ENCODE measurements at regions of chr6 and their contacts with region 1.

Region 1: GRCh38 chr6:161370880-161371279 is 97.0 kb upstream of the AGPAT4 start:
- DNase-seq: no peak
- H3K4me3 ChIP-seq: no peak overlapping the region
- H3K27ac ChIP-seq: no peak overlapping the region
- H3K4me1 ChIP-seq: peaks cover 0 to 10% (median 5%) of the 10 kb centered on the region in 4 donors
- H3K27me3 ChIP-seq: no peaks in the 10 kb centered on the region
- CTCF ChIP-seq: peak; percentile 79 to 88 (median 81)
- EP300 ChIP-seq: no peak
- POLR2A ChIP-seq: no peak

Region 2: GRCh38 chr6:160733050-160733646 is 637.7 kb before region 1 on chr6:
- intact Hi-C with region 1: loop called (anchors 10 kb)
- DNase-seq: no peak
- H3K4me3 ChIP-seq: no peak overlapping the region
- H3K27ac ChIP-seq: no peak overlapping the region
- H3K4me1 ChIP-seq: no peaks in the 10 kb centered on the region
- H3K27me3 ChIP-seq: peaks cover 0 to 6% (median 0%) of the 10 kb centered on the region in 4 donors
- CTCF ChIP-seq: peak; percentile 43 to 60 (median 45)
- EP300 ChIP-seq: no peak
- POLR2A ChIP-seq: no peak

Region 3: DNA sequence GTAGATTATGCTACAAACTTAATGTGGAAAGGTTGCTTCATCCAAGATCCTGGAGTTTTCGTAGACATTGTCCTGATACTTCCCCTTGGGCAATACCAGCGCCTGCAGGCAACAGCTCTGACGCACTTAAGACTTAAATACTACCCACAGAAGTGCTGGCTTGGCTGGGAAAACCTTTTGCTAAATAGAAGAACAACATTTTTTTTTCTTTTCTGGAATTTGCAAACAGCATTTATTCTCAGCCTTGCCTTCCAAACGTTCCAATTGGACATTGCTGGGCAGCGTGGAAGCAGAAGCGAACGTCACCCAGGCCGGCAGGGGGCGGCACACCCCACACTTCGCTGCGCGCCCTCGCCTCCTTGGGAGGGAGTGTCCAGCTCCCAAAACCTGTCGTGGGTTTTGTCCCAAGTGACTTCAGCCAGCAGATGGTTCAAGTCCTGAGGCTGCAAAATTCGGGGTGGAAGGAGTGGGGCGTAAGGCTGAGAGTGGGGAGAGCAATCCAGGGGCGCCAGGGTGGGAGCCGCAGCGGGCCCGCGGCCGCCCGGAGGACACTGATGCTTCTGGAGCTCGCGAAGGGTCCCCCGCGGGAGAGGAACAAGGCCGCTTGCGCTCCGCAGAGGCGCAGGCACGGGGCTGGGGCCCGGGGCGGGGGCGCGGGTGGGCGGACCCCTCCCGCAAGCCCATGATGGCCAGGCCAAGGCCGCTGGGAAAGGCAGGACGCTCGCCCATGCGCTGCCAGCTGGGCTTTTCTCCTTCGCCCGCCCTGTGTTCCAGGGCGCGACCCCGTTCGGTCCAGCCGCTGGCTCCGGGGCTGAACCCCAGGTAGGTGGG is 440.1 kb before region 1 on chr6:
- intact Hi-C with region 1: loop called (anchors 2 kb)
- DNase-seq: no peak
- H3K4me3 ChIP-seq: peak overlapping the region; percentile 56 to 63 (median 58)
- H3K27ac ChIP-seq: peak overlapping the region in 1 of 4 donors; percentile 5
- H3K4me1 ChIP-seq: peaks cover 0 to 13% (median 11%) of the 10 kb centered on the region in 4 donors
- H3K27me3 ChIP-seq: peaks cover 0 to 22% (median 0%) of the 10 kb centered on the region in 4 donors
- CTCF ChIP-seq: peak; percentile 85 to 90 (median 90)
- EP300 ChIP-seq: no peak
- POLR2A ChIP-seq: no peak

Region 4: DNA sequence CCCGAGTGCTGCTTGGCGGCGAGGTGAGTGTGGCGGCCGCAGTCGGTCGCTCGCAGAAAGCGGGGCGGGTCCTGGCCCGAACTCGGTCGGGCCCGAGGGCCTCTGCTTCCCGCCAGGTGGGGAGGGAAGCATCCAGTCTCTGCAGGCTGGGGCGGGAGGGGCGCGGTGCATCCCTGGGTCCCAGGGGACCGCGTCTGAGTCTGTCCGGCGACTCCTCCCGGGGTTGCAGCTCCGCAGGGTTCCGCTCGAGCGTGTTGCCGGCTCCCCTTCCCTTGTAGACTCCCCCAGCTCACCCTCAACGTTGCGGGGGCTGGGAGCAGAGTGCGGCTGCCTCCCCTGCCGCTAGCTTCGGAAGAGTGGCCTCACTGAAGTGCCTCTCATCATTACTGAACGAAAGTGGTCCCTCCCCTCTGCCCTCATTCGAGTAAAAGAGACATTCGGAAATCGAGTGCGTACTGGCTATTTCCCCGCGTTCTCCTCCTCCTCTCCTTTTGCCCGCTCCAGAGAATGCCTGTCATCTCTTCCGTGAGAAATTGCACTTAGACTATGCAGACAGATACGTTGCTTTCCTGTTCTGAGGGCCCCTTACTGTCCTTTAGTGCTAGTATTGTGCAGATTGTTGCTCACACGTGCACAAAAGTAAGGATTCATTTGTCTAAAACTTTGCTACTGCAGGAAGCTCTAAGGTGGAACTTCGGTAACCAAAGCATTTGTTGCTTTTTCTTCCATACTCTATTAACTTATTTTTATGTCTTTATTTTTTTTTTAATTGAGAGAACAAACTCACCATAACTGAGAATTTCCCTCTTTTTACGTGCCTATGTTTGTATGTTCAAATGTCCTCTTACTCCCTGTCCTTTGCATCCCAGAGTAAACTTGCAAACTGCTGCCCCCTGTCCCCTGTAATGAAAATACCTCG is 378.6 kb before region 1 on chr6:
- intact Hi-C with region 1: no loop called
- DNase-seq: peak; percentile 91
- H3K4me3 ChIP-seq: peak overlapping the region; percentile 72 to 99 (median 95)
- H3K27ac ChIP-seq: peak overlapping the region; percentile 88 to 95 (median 94)
- H3K4me1 ChIP-seq: peaks cover 10 to 47% (median 28%) of the 10 kb centered on the region in 4 donors
- H3K27me3 ChIP-seq: no peaks in the 10 kb centered on the region
- CTCF ChIP-seq: peak; percentile 54 to 59 (median 58)
- EP300 ChIP-seq: no peak
- POLR2A ChIP-seq: no peak

Region 5: DNA sequence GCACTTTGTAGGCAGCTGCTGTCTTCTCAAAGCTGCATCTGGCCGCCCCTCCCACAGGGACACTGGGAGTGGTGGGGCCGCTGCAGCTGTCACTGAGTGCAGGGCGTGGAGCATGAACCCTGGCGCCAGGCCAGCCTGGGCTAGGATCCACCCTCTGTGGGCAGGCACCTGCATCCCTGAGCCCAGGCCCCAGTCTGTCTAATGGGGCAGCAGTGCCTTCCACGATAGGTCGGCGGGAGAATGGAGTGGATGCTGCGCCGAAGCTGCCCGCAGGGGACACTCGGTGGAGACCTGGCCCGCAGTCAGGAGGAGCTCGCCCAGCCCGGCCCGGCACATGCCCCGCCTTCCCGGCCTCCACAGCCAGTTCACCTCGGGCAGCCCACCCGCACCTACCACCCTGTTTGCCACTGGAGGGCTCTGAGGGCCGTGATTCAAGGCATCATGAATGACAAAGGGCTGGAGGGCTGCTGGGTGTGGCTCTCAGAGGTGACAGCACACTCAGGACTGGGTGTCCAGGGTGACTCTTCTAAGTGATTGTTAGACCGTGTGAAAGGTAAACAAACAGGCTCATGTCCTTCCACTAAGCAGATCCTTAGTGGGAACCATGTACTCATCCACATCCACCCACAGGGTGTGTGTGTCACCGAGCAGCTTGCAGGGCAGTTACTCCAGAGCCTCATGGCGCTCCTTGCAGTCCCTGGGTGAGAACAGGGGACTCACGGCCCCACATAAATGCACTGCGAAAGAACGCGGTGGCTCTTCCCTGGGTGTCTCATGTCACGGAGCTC is 230.9 kb before region 1 on chr6:
- intact Hi-C with region 1: loop called (anchors 5 kb)
- DNase-seq: peak; percentile 90
- H3K4me3 ChIP-seq: peak overlapping the region in 1 of 4 donors; percentile 4
- H3K27ac ChIP-seq: no peak overlapping the region
- H3K4me1 ChIP-seq: peaks cover 0 to 6% (median 0%) of the 10 kb centered on the region in 4 donors
- H3K27me3 ChIP-seq: no peaks in the 10 kb centered on the region
- CTCF ChIP-seq: no peak
- EP300 ChIP-seq: no peak
- POLR2A ChIP-seq: no peak